ENCODE measurements at regions of chr12 and their contacts with region 1.

Region 1: GRCh38 chr12:44774815-44775411 is 101.2 kb downstream of the NELL2 start:
- DNase-seq: no peak
- ATAC-seq: peak; percentile 63
- H3K4me3 ChIP-seq: no peak overlapping the region
- H3K27ac ChIP-seq: no peak overlapping the region
- H3K4me1 ChIP-seq: no peaks in the 10 kb centered on the region
- H3K27me3 ChIP-seq: no peaks in the 10 kb centered on the region
- CTCF ChIP-seq: peak; percentile 66 to 85 (median 82)
- EP300 ChIP-seq: no peak
- POLR2A ChIP-seq: no peak
- RAD21 ChIP-seq: peak; percentile 61

Region 2: GRCh38 chr12:43362910-43363694 is 1411.8 kb before region 1 on chr12:
- CTCF ChIA-PET with region 1: no interaction called
- POLR2A ChIA-PET with region 1: no interaction called
- RAD21 ChIA-PET with region 1: no interaction called
- SMC1A ChIA-PET with region 1: no interaction called
- in situ Hi-C with region 1: no loop called
- intact Hi-C with region 1: no loop called
- DNase-seq: no peak
- ATAC-seq: no peak
- H3K4me3 ChIP-seq: no peak overlapping the region
- H3K27ac ChIP-seq: no peak overlapping the region
- H3K4me1 ChIP-seq: no peaks in the 10 kb centered on the region
- H3K27me3 ChIP-seq: no peaks in the 10 kb centered on the region; a peak in 1 of 4 replicates
- CTCF ChIP-seq: no peak
- EP300 ChIP-seq: no peak
- POLR2A ChIP-seq: no peak
- RAD21 ChIP-seq: no peak

Region 3: DNA sequence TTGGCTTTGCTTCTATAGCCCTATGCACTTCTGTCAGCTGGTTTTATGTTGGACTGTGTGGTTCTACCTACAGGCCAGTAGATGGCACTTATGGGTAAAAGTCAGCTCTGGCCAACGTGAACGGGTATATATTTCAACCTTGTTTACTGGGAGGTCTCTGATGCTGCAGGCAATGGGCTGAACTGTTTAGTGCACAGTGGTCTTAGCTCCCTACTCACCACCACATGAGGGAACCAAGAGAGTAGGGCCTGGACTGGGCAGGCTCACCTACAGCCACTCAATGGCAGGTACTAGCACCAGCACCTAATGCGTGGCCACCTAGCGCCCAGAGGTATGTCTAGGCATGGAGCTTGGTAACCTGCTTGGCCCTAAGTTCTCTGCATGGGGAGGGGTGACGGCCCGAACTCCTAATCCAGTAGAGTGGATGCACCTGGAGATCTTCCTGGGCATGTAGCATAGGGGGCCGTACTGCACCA is 457.2 kb before region 1 on chr12:
- CTCF ChIA-PET with region 1: interaction called, 5 read pairs
- POLR2A ChIA-PET with region 1: no interaction called
- RAD21 ChIA-PET with region 1: no interaction called
- SMC1A ChIA-PET with region 1: interaction called, 4 read pairs
- in situ Hi-C with region 1: no loop called
- intact Hi-C with region 1: loop called (anchors 10 kb)
- DNase-seq: no peak
- ATAC-seq: peak; percentile 93
- H3K4me3 ChIP-seq: no peak overlapping the region
- H3K27ac ChIP-seq: no peak overlapping the region
- H3K4me1 ChIP-seq: no peaks in the 10 kb centered on the region
- H3K27me3 ChIP-seq: no peaks in the 10 kb centered on the region
- CTCF ChIP-seq: peak; percentile 51 to 57 (median 55); a peak in 5 of 6 replicates
- EP300 ChIP-seq: no peak
- POLR2A ChIP-seq: no peak
- RAD21 ChIP-seq: peak; percentile 89

Region 4: GRCh38 chr12:44717612-44718011 is 57.3 kb before region 1 on chr12:
- CTCF ChIA-PET with region 1: no interaction called
- POLR2A ChIA-PET with region 1: no interaction called
- RAD21 ChIA-PET with region 1: no interaction called
- SMC1A ChIA-PET with region 1: no interaction called
- in situ Hi-C with region 1: no loop called
- intact Hi-C with region 1: no loop called
- DNase-seq: no peak
- ATAC-seq: no peak
- H3K4me3 ChIP-seq: no peak overlapping the region
- H3K27ac ChIP-seq: no peak overlapping the region
- H3K4me1 ChIP-seq: no peaks in the 10 kb centered on the region
- H3K27me3 ChIP-seq: no peaks in the 10 kb centered on the region
- CTCF ChIP-seq: no peak
- EP300 ChIP-seq: no peak
- POLR2A ChIP-seq: no peak
- RAD21 ChIP-seq: no peak

Region 5: GRCh38 chr12:44812062-44812461 is 37.1 kb after region 1 on chr12:
- CTCF ChIA-PET with region 1: interaction called, 6 read pairs
- POLR2A ChIA-PET with region 1: no interaction called
- RAD21 ChIA-PET with region 1: no interaction called
- SMC1A ChIA-PET with region 1: interaction called, 6 read pairs
- in situ Hi-C with region 1: no loop called
- intact Hi-C with region 1: loop called (anchors 1 kb)
- DNase-seq: no peak
- ATAC-seq: peak; percentile 74
- H3K4me3 ChIP-seq: no peak overlapping the region
- H3K27ac ChIP-seq: no peak overlapping the region
- H3K4me1 ChIP-seq: no peaks in the 10 kb centered on the region
- H3K27me3 ChIP-seq: no peaks in the 10 kb centered on the region
- CTCF ChIP-seq: peak in 2 of 3 experiments; percentile 36 to 37; a peak in 3 of 6 replicates
- EP300 ChIP-seq: no peak
- POLR2A ChIP-seq: no peak
- RAD21 ChIP-seq: peak; percentile 58